GM12878 (cell line): ENCODE measurements at regions of chr1 and their contacts with region 1.

Region 1: DNA sequence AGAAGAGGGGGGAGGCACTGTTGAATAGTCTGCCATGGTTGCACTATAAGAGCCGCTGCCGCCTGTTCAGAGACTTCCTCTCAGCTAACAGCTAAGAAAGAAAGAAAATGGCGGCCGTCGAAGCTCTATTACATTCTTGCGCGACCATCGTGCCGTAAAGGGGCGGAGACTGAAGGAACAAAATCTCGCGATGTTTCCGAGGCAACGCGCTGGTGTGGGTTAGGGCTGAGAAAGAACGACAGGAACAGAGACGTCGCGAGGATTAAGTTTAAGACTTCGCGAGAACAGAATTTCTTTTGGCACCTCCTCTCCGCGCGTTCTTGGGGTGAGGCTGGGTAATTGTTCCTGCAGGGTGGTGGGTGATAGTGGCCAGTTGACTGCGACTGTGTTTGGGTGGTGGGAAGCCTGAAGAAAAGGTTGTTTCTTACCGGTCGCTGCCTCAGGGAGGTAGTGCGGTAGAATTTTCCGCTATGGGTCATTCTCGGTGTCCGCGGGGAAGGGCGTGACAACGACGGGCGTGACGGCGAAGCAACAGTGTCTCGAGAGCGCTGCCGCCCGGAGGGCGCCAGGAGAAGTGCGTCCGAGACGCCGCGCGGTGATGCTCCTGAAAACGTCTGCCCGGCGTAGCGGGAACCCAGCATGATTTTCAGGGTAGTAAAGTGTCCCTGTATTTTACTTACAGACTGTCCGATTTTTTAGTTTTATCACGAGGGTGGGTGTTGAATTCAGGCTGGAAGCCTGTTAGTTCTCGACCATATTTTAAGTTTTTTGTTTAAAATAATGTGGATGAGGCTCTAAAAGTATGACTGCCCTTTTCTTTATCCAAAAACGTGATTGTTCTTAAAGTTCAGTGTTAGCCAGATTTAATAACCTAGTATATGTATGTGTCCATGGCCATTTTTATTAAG is at the start of gene FUBP1:
- DNase-seq: peak; percentile 99
- ATAC-seq: peak; percentile 78
- H3K4me3 ChIP-seq: peak within 1 kb of the TSS; percentile 95
- H3K27ac ChIP-seq: peak within 1 kb of the TSS; percentile 100
- H3K4me1 ChIP-seq: no peaks in the 10 kb centered on the region; the same call in 1 of the 2 replicates
- H3K27me3 ChIP-seq: no peaks in the 10 kb centered on the region
- CTCF ChIP-seq: peak; percentile 77 to 84 (median 81)
- EP300 ChIP-seq: no peak
- POLR2A ChIP-seq: peak; percentile 96
- RAD21 ChIP-seq: peak; percentile 15; the same call in 1 of the 2 replicates
- polyA plus RNA-seq, gene FUBP1: 110 to 114 TPM

Region 2: GRCh38 chr1:77683160-77684148 is 295.8 kb before region 1 on chr1:
- CTCF ChIA-PET with region 1: interaction called, 3 read pairs
- POLR2A ChIA-PET with region 1: interaction called, 4 read pairs
- RAD21 ChIA-PET with region 1: no interaction called
- SMC1A ChIA-PET with region 1: interaction called, 5 read pairs
- in situ Hi-C with region 1: no loop called
- intact Hi-C with region 1: loop called (anchors 5 kb)
- DNase-seq: peak; percentile 45
- ATAC-seq: peak; percentile 84
- H3K4me3 ChIP-seq: peak overlapping the region; percentile 71
- H3K27ac ChIP-seq: peak overlapping the region; percentile 88
- H3K4me1 ChIP-seq: 0 out of 2 replicates have a peak, but pooled peaks cover 3% of the 10 kb centered on the region
- H3K27me3 ChIP-seq: no peaks in the 10 kb centered on the region
- CTCF ChIP-seq: peak; percentile 77 to 84 (median 80); a peak in 5 of 6 replicates
- EP300 ChIP-seq: no peak
- POLR2A ChIP-seq: peak; percentile 89
- RAD21 ChIP-seq: peak; percentile 47

Region 3: DNA sequence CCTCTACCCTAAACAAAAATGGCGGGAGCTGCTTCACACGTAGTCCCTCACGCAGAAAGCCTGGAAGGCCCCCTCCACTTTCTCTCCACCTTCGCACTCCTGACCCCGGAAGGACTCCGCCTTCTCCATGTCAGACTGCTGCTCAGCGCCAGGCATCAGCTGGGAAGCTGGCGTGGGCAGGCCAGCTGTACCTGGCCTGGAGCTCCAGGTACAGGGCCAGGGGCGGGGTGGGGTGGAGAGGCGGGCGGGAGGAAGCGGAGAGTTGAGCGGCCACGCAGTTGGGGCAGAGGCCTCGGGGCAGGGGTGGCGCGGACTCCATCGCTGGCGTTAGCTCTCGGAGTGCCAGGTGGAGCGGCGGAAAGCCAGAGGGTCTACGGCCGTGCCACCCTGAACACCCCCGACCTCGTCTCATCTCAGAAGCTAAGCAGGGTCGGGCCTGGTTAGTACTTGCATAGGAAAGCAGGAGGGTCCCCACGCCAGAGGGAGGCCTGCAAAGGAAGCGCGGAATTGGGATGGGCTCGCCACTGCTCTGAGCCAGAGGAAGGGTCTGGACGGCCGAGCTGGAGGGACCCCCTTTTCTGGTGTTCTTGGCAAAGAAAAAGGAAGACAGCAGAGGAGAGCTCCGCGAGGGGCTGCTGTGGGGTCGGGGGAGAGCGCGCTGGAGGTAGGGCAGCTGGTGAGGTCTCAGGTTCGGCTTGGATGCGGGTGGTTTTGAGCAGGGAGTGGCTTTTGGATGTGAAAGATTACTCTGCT is 199.5 kb before region 1 on chr1 and contains the start of gene MIGA1:
- CTCF ChIA-PET with region 1: no interaction called
- POLR2A ChIA-PET with region 1: interaction called, 3 read pairs
- RAD21 ChIA-PET with region 1: no interaction called
- SMC1A ChIA-PET with region 1: interaction called, 4 read pairs
- in situ Hi-C with region 1: no loop called
- intact Hi-C with region 1: loop called (anchors 5 kb)
- DNase-seq: peak; percentile 47
- ATAC-seq: peak; percentile 94
- H3K4me3 ChIP-seq: peak within 1 kb of the TSS; percentile 84
- H3K27ac ChIP-seq: peak within 1 kb of the TSS; percentile 68
- H3K4me1 ChIP-seq: peaks cover 7% of the 10 kb centered on the region; the same call in 1 of the 2 replicates
- H3K27me3 ChIP-seq: no peaks in the 10 kb centered on the region
- CTCF ChIP-seq: no peak
- EP300 ChIP-seq: no peak
- POLR2A ChIP-seq: no peak; the same call in none of the 2 replicates
- RAD21 ChIP-seq: no peak; the same call in 1 of the 2 replicates
- polyA plus RNA-seq, gene MIGA1: 1.3 to 1.7 TPM

Region 4: DNA sequence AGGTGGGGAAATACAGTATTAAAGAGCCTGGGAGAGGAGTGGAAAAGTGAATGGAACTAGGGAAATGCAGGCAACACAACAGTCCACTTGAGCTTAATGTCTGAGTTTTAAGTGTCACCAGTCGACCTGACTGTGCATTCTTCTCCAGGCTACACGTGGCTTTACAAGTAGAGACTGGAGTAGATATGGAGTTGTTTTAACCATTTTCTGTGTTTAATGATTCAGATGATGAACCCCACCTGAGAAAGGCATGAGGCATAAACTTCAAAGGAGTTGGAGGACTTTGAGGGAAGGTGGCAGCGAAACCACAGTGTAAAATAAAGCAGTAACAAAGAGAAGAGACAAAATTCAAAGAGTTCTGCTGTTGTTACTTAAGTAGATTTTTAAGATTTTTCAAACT is 12.9 kb before region 1 on chr1:
- CTCF ChIA-PET with region 1: interaction called, 14 read pairs
- POLR2A ChIA-PET with region 1: interaction called, 4 read pairs
- RAD21 ChIA-PET with region 1: interaction called, 3 read pairs
- SMC1A ChIA-PET with region 1: interaction called, 16 read pairs
- in situ Hi-C with region 1: no loop called
- intact Hi-C with region 1: no loop called
- DNase-seq: no peak
- ATAC-seq: no peak
- H3K4me3 ChIP-seq: no peak overlapping the region
- H3K27ac ChIP-seq: no peak overlapping the region
- H3K4me1 ChIP-seq: no peaks in the 10 kb centered on the region
- H3K27me3 ChIP-seq: no peaks in the 10 kb centered on the region
- CTCF ChIP-seq: no peak
- EP300 ChIP-seq: no peak
- POLR2A ChIP-seq: no peak
- RAD21 ChIP-seq: no peak

Region 5: GRCh38 chr1:77994117-77994705 is 15.0 kb after region 1 on chr1:
- CTCF ChIA-PET with region 1: interaction called, 8 read pairs
- POLR2A ChIA-PET with region 1: interaction called, 312 read pairs
- RAD21 ChIA-PET with region 1: interaction called, 158 read pairs
- SMC1A ChIA-PET with region 1: interaction called, 17 read pairs
- in situ Hi-C with region 1: no loop called
- intact Hi-C with region 1: no loop called
- DNase-seq: no peak
- ATAC-seq: no peak
- H3K4me3 ChIP-seq: no peak overlapping the region
- H3K27ac ChIP-seq: no peak overlapping the region
- H3K4me1 ChIP-seq: peaks cover 3% of the 10 kb centered on the region; the same call in 1 of the 2 replicates
- H3K27me3 ChIP-seq: no peaks in the 10 kb centered on the region
- CTCF ChIP-seq: no peak
- EP300 ChIP-seq: no peak
- POLR2A ChIP-seq: no peak
- RAD21 ChIP-seq: no peak

Region 6: GRCh38 chr1:78004719-78005447 is 25.7 kb after region 1 on chr1 and contains the start of gene DNAJB4:
- CTCF ChIA-PET with region 1: interaction called, 73 read pairs
- POLR2A ChIA-PET with region 1: interaction called, 312 read pairs
- RAD21 ChIA-PET with region 1: interaction called, 158 read pairs
- SMC1A ChIA-PET with region 1: interaction called, 89 read pairs
- in situ Hi-C with region 1: no loop called
- intact Hi-C with region 1: loop called (anchors 1 kb)
- DNase-seq: peak; percentile 96
- ATAC-seq: peak; percentile 88
- H3K4me3 ChIP-seq: peak within 1 kb of the TSS; percentile 78
- H3K27ac ChIP-seq: peak within 1 kb of the TSS; percentile 94
- H3K4me1 ChIP-seq: no peaks in the 10 kb centered on the region
- H3K27me3 ChIP-seq: no peaks in the 10 kb centered on the region
- CTCF ChIP-seq: no peak
- EP300 ChIP-seq: no peak
- POLR2A ChIP-seq: peak; percentile 72
- RAD21 ChIP-seq: no peak
- polyA plus RNA-seq, gene DNAJB4: 3.8 to 5.1 TPM

Region 7: GRCh38 chr1:78081980-78082860 is 103.0 kb after region 1 on chr1:
- CTCF ChIA-PET with region 1: no interaction called
- POLR2A ChIA-PET with region 1: no interaction called
- RAD21 ChIA-PET with region 1: no interaction called
- SMC1A ChIA-PET with region 1: no interaction called
- in situ Hi-C with region 1: no loop called
- intact Hi-C with region 1: no loop called
- DNase-seq: no peak
- ATAC-seq: no peak
- H3K4me3 ChIP-seq: no peak overlapping the region
- H3K27ac ChIP-seq: no peak overlapping the region
- H3K4me1 ChIP-seq: peaks cover 7% of the 10 kb centered on the region; the same call in 1 of the 2 replicates
- H3K27me3 ChIP-seq: no peaks in the 10 kb centered on the region
- CTCF ChIP-seq: no peak
- EP300 ChIP-seq: no peak
- POLR2A ChIP-seq: no peak
- RAD21 ChIP-seq: no peak

Region 8: DNA sequence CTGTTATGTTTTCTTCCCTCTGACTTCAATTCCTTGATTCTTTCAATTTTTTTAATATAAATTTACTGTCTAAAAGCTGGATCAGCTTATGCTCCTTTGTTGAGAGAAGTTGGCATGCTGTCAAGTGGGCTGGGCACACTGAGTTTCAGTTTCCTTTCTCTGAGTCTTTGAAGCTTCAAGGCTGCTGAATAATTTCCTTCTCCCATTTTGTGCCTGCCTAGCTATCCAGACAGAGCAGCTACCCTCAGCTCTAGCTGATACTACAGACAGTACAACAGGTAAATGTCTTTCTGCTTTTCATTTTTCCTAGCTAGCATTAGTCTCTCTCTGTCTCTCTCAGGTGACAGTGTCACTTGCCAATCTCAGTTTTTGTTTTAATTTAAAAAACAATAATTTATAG is 670.4 kb after region 1 on chr1 and contains the start of gene IFI44:
- CTCF ChIA-PET with region 1: interaction called, 3 read pairs
- POLR2A ChIA-PET with region 1: interaction called, 3 read pairs
- RAD21 ChIA-PET with region 1: no interaction called
- SMC1A ChIA-PET with region 1: interaction called, 3 read pairs
- in situ Hi-C with region 1: no loop called
- intact Hi-C with region 1: loop called (anchors 5 kb)
- DNase-seq: peak; percentile 75
- ATAC-seq: peak; percentile 72
- H3K4me3 ChIP-seq: peak within 1 kb of the TSS; percentile 95
- H3K27ac ChIP-seq: peak within 1 kb of the TSS; percentile 82
- H3K4me1 ChIP-seq: no peaks in the 10 kb centered on the region
- H3K27me3 ChIP-seq: no peaks in the 10 kb centered on the region
- CTCF ChIP-seq: no peak
- EP300 ChIP-seq: no peak
- POLR2A ChIP-seq: peak; percentile 81
- RAD21 ChIP-seq: no peak
- polyA plus RNA-seq, gene IFI44: 75.6 to 125 TPM